ENCODE measurements at regions of chr11 and their contacts with region 1.

Region 1: DNA sequence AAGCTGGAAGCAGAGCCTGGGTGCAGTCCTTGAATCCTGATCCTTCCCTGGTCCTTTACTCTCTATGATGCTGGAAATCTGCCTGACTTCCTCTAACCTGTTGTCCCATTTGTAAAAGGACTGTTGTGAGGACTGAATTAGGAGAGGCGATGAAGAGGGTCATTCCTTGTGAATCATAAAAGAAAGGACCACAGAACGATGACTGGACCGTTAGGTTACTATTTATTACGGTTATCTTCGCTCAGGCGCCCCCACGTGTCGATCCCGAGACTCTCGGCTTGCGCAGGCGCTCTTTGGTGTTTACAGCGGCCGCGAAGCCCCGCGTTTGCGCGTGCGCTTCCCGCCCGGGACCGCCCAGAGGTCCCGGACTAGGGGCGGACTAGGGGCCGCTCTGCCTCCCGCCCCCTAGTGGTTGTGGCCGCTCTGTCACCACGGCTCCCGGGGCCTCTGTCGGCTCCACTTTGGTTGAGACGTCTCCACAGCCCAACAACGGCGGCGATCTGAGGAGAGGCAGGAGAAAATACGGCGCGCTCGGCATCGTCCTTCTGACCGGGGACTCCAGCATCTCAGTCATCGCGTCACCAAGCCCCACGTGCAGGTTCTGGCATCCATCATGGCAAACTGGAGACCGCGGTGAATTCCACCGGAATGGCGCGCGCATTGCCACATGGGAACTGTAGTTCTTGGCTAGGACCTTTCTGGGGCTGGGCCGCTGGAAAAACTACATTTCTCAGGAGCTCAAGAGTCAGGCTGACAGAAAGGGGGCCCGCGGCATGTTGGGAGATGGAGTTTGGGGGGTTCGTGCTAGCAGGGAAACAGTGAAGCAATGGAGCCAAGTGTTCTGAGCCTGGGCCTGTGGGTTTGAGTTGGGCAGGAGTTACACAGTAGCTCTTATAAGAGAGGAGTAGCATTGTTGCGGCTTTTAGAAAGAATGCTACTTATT is at the start of gene STARD10:
- DNase-seq: peak; percentile 94 to 98 (median 95)
- H3K4me3 ChIP-seq: peak within 1 kb of the TSS; percentile 81 to 96
- H3K4me3 Mint-ChIP-seq: peak within 1 kb of the TSS; percentile 96 to 99 (median 98)
- H3K27ac ChIP-seq: peak within 1 kb of the TSS; percentile 97
- H3K27ac Mint-ChIP-seq: peak within 1 kb of the TSS; percentile 99 to 100 (median 100)
- H3K4me1 ChIP-seq: peaks cover 23% of the 10 kb centered on the region
- H3K4me1 Mint-ChIP-seq: peaks cover 13 to 28% (median 22%) of the 10 kb centered on the region in 4 donors
- H3K27me3 ChIP-seq: no peaks in the 10 kb centered on the region
- H3K27me3 Mint-ChIP-seq: no peaks in the 10 kb centered on the region
- total RNA-seq, gene STARD10: 23.0 to 23.5 TPM

Region 2: DNA sequence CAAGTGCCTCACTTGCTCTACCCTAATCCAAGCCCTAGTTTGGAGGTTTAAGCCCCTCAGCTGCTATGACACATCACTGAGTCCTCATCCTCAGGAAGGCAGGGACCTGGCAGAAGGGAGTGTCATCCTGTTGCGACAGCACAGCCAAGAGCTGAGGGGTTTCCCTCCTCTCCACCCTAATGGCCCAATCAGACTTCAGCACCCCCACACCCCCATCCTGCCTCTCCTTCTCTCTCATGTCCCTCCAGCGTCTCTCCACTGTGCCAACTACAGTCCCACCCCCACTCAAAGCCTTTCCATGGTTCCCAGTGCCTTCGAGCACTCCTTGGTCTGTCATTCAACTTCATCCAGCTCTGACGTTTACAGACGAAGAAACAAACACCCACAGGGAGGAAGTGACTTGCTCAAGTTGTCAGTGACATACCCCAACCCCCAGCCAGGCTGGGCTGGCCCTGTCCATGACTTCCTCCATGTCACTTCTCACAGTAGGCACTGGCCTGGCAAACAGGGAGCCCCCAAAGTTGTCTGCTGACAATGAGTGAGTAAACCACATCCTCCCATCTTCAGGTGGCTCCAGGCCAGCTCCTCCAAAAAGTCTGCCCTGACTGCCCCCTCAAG is 57.1 kb before region 1 on chr11:
- CTCF ChIA-PET with region 1: interaction called, 8 read pairs
- POLR2A ChIA-PET with region 1: interaction called, 10 read pairs
- intact Hi-C with region 1: no loop called
- DNase-seq: peak; percentile 71 to 90 (median 78)
- H3K4me3 ChIP-seq: no peak overlapping the region
- H3K4me3 Mint-ChIP-seq: peak overlapping the region; percentile 6 to 74 (median 54)
- H3K27ac ChIP-seq: peak overlapping the region; percentile 54
- H3K27ac Mint-ChIP-seq: peak overlapping the region; percentile 89 to 100 (median 98)
- H3K4me1 ChIP-seq: peaks cover 59% of the 10 kb centered on the region
- H3K4me1 Mint-ChIP-seq: peaks cover 43 to 65% (median 54%) of the 10 kb centered on the region in 4 donors
- H3K27me3 ChIP-seq: no peaks in the 10 kb centered on the region
- H3K27me3 Mint-ChIP-seq: no peaks in the 10 kb centered on the region

Region 3: GRCh38 chr11:72781313-72782050 is 12.2 kb before region 1 on chr11:
- CTCF ChIA-PET with region 1: interaction called, 20 read pairs
- POLR2A ChIA-PET with region 1: interaction called, 31 read pairs
- intact Hi-C with region 1: loop called (anchors 1 kb)
- DNase-seq: peak; percentile 52 to 75 (median 57)
- H3K4me3 ChIP-seq: peak overlapping the region; percentile 35 to 52
- H3K4me3 Mint-ChIP-seq: peak overlapping the region; percentile 79 to 86 (median 84)
- H3K27ac ChIP-seq: peak overlapping the region; percentile 43
- H3K27ac Mint-ChIP-seq: peak overlapping the region; percentile 55 to 93 (median 76)
- H3K4me1 ChIP-seq: peaks cover 31% of the 10 kb centered on the region
- H3K4me1 Mint-ChIP-seq: peaks cover 11 to 55% (median 24%) of the 10 kb centered on the region in 4 donors
- H3K27me3 ChIP-seq: no peaks in the 10 kb centered on the region
- H3K27me3 Mint-ChIP-seq: no peaks in the 10 kb centered on the region

Region 4: GRCh38 chr11:72821883-72822799 is 28.4 kb after region 1 on chr11:
- CTCF ChIA-PET with region 1: interaction called, 84 read pairs
- POLR2A ChIA-PET with region 1: interaction called, 11 read pairs
- intact Hi-C with region 1: loop called (anchors 1 kb)
- DNase-seq: peak; percentile 81 to 93 (median 86)
- H3K4me3 ChIP-seq: no peak overlapping the region
- H3K4me3 Mint-ChIP-seq: peak overlapping the region in 5 of 8 donors; percentile 8 to 62 (median 31)
- H3K27ac ChIP-seq: peak overlapping the region; percentile 45
- H3K27ac Mint-ChIP-seq: peak overlapping the region in 6 of 7 donors; percentile 17 to 93 (median 68)
- H3K4me1 ChIP-seq: peaks cover 14% of the 10 kb centered on the region
- H3K4me1 Mint-ChIP-seq: peaks cover 17 to 35% (median 22%) of the 10 kb centered on the region in 4 donors
- H3K27me3 ChIP-seq: no peaks in the 10 kb centered on the region
- H3K27me3 Mint-ChIP-seq: no peaks in the 10 kb centered on the region

Region 5: DNA sequence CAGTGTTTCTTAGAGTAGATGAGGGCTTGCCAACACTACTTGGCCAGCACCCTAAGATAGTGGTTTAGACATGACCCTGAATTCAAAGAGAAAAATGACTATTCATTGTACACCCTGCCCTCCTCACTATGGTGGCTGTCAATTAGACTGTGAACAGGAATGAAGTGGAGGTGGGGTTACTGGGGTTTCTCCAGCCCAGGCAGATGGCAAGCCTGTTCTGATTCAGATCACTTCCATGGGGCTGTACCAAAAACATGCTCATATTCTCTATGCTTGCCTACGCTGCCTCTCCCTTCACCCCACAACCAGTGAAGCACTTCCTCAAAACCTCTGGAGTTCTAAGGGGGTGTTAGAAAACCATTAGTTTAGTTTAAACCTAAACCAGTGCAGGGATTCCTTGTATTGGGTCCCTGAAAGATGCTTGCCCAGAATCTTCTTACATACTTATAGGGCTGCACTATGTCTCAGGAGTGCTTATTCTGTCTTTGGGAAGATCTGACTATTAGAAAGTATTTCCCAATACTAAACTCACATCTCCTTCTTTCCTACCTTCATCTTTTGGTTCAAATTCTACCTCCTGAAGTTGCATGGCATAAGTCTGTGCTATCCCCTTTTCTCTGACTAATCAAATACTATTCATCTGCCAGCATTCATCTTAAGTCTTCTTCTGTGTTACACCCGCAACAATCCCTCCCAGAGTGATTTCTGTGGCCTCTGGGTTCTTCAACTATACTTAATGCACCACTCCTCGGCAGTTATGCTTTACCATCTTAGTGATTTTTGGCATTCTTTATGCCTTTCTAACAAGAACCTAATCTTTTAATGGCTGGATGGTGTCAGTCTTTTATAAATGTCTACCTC is 92.3 kb after region 1 on chr11:
- CTCF ChIA-PET with region 1: no interaction called
- POLR2A ChIA-PET with region 1: no interaction called
- intact Hi-C with region 1: no loop called
- DNase-seq: no peak
- H3K4me3 ChIP-seq: no peak overlapping the region
- H3K4me3 Mint-ChIP-seq: no peak overlapping the region
- H3K27ac ChIP-seq: no peak overlapping the region
- H3K27ac Mint-ChIP-seq: peak overlapping the region in 2 of 7 donors; percentile 8 to 64
- H3K4me1 ChIP-seq: no peaks in the 10 kb centered on the region
- H3K4me1 Mint-ChIP-seq: no peaks in the 10 kb centered on the region
- H3K27me3 ChIP-seq: no peaks in the 10 kb centered on the region
- H3K27me3 Mint-ChIP-seq: no peaks in the 10 kb centered on the region

Region 6: GRCh38 chr11:74492974-74493790 is 1699.5 kb after region 1 on chr11 and contains the start of gene LIPT2:
- CTCF ChIA-PET with region 1: no interaction called
- POLR2A ChIA-PET with region 1: no interaction called
- intact Hi-C with region 1: loop called (anchors 5 kb)
- DNase-seq: peak; percentile 95 to 98 (median 97)
- H3K4me3 ChIP-seq: peak within 1 kb of the TSS; percentile 39 to 84
- H3K4me3 Mint-ChIP-seq: peak within 1 kb of the TSS; percentile 87 to 93 (median 88)
- H3K27ac ChIP-seq: peak within 1 kb of the TSS; percentile 94
- H3K27ac Mint-ChIP-seq: peak within 1 kb of the TSS; percentile 73 to 96 (median 93)
- H3K4me1 ChIP-seq: peaks cover 12% of the 10 kb centered on the region
- H3K4me1 Mint-ChIP-seq: peaks cover 9 to 32% (median 20%) of the 10 kb centered on the region in 4 donors
- H3K27me3 ChIP-seq: no peaks in the 10 kb centered on the region
- H3K27me3 Mint-ChIP-seq: no peaks in the 10 kb centered on the region
- total RNA-seq, gene LIPT2: 8.0 to 15.5 TPM

Measured in CD4-positive, alpha-beta memory T cell (primary cell).